ENCODE measurements at regions of chrX and their contacts with region 1.

Region 1: GRCh38 chrX:136880452-136881013 is at the start of gene RBMX:
- DNase-seq: peak; percentile 93
- ATAC-seq: peak; percentile 94
- H3K4me3 ChIP-seq: peak within 1 kb of the TSS; percentile 77
- H3K27ac ChIP-seq: peak within 1 kb of the TSS; percentile 94
- H3K4me1 ChIP-seq: no peaks in the 10 kb centered on the region
- H3K27me3 ChIP-seq: no peaks in the 10 kb centered on the region
- CTCF ChIP-seq: no peak
- POLR2A ChIP-seq: peak; percentile 99
- RAD21 ChIP-seq: no peak
- total RNA-seq, gene RBMX: 318 and 337 TPM in 2 replicates

Region 2: GRCh38 chrX:135345107-135345589 is 1535.4 kb before region 1 on chrX:
- CTCF ChIA-PET with region 1: no interaction called
- POLR2A ChIA-PET with region 1: no interaction called
- dilution Hi-C with region 1: no loop called
- in situ Hi-C with region 1: no loop called
- intact Hi-C with region 1: no loop called
- DNase-seq: peak; percentile 49
- ATAC-seq: no peak
- H3K4me3 ChIP-seq: peak overlapping the region; percentile 55
- H3K27ac ChIP-seq: peak overlapping the region; percentile 61
- H3K4me1 ChIP-seq: 0 out of 2 replicates have a peak, but pooled peaks cover 2% of the 10 kb centered on the region
- H3K27me3 ChIP-seq: no peaks in the 10 kb centered on the region
- CTCF ChIP-seq: no peak
- POLR2A ChIP-seq: 0 out of 2 replicates have a peak, but pooled peaks have one; percentile 32
- RAD21 ChIP-seq: no peak

Region 3: DNA sequence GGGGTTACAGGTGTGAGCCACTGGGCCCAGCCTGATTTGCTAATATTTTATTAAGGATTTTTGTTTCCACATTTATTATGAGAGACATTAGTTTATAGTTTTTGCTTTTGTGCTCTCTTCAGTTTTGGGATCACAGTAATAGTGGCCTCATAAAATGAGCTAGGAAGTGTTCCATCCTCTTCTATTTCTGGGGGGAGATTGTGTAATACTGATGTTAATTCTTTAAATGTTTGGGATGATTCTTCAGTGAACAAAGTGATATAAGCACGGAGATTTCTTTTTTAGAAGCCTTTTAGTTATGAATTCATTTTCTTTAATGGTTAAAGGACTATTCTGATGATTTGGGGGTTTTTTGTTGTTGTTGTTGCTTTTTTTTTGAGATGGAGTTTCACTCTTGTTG is 41.3 kb before region 1 on chrX:
- CTCF ChIA-PET with region 1: no interaction called
- POLR2A ChIA-PET with region 1: interaction called, 35 read pairs
- dilution Hi-C with region 1: no loop called
- in situ Hi-C with region 1: no loop called
- intact Hi-C with region 1: no loop called
- DNase-seq: peak; percentile 15
- ATAC-seq: peak; percentile 35; the same call in 1 of the 2 replicates
- H3K4me3 ChIP-seq: no peak overlapping the region
- H3K27ac ChIP-seq: peak overlapping the region; percentile 57; the same call in 1 of the 2 replicates
- H3K4me1 ChIP-seq: 0 out of 2 replicates have a peak, but pooled peaks cover 2% of the 10 kb centered on the region
- H3K27me3 ChIP-seq: no peaks in the 10 kb centered on the region
- CTCF ChIP-seq: no peak
- POLR2A ChIP-seq: no peak
- RAD21 ChIP-seq: no peak

Region 4: GRCh38 chrX:136909706-136910564 is 29.4 kb after region 1 on chrX:
- CTCF ChIA-PET with region 1: no interaction called
- POLR2A ChIA-PET with region 1: interaction called, 4 read pairs
- dilution Hi-C with region 1: no loop called
- in situ Hi-C with region 1: no loop called
- intact Hi-C with region 1: loop called (anchors 1 kb)
- DNase-seq: peak; percentile 91
- ATAC-seq: peak; percentile 82
- H3K4me3 ChIP-seq: peak overlapping the region; percentile 53
- H3K27ac ChIP-seq: peak overlapping the region; percentile 60
- H3K4me1 ChIP-seq: no peaks in the 10 kb centered on the region
- H3K27me3 ChIP-seq: no peaks in the 10 kb centered on the region
- CTCF ChIP-seq: no peak
- POLR2A ChIP-seq: no peak
- RAD21 ChIP-seq: no peak